ENCODE measurements at regions of chr18 and their contacts with region 1.

Region 1: DNA sequence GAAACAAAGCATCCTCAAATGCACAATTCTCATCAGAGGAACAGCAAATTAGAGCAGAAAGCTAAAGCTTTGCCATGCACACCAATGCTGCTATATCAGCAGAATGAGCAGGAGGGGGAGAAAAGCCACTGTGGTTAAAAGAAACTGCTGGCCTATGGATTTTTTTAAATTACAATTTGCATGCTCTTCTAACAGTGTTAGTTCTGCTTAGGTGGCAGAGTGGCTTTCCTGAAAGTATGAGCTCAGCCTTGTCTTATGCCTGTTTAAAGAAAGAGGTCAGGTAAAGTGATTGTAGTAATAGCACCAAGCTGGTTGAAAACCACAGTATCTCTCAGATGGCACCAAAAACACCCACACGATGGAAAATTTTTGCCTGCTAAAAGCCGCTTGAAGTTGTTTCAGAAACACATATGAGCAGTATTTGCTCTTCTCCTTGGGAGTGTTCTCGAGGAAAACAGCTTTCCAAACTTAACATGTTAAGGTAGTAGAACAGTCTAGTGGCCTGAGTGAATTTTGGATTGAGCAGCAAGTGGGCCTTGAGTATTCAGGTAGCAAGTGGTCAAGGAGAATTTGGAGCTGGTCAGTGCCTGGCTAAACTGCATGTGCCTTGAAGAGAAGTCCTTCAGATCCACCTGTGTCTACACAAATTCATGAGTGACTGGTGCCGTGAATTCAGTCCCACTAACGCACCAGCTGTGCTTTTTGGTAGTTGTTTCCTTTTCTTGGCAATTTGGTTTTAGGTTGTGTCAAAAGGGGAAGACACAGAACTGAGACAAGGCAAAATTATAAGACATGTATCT is 19.6 kb upstream of the NDUFV2 start:
- DNase-seq: peak; percentile 66
- ATAC-seq: peak; percentile 85
- H3K4me3 Mint-ChIP-seq: peak overlapping the region; percentile 56
- H3K27ac Mint-ChIP-seq: peak overlapping the region; percentile 94
- H3K4me1 Mint-ChIP-seq: peaks cover 48% of the 10 kb centered on the region
- H3K27me3 Mint-ChIP-seq: no peaks in the 10 kb centered on the region

Region 2: GRCh38 chr18:9069601-9070000 is 13.3 kb before region 1 on chr18:
- CTCF ChIA-PET with region 1: interaction called, 22 read pairs
- POLR2A ChIA-PET with region 1: interaction called, 10 read pairs
- DNase-seq: no peak
- ATAC-seq: no peak
- H3K4me3 Mint-ChIP-seq: no peak overlapping the region
- H3K27ac Mint-ChIP-seq: peak overlapping the region; percentile 49
- H3K4me1 Mint-ChIP-seq: peaks cover 18% of the 10 kb centered on the region
- H3K27me3 Mint-ChIP-seq: no peaks in the 10 kb centered on the region

Region 3: DNA sequence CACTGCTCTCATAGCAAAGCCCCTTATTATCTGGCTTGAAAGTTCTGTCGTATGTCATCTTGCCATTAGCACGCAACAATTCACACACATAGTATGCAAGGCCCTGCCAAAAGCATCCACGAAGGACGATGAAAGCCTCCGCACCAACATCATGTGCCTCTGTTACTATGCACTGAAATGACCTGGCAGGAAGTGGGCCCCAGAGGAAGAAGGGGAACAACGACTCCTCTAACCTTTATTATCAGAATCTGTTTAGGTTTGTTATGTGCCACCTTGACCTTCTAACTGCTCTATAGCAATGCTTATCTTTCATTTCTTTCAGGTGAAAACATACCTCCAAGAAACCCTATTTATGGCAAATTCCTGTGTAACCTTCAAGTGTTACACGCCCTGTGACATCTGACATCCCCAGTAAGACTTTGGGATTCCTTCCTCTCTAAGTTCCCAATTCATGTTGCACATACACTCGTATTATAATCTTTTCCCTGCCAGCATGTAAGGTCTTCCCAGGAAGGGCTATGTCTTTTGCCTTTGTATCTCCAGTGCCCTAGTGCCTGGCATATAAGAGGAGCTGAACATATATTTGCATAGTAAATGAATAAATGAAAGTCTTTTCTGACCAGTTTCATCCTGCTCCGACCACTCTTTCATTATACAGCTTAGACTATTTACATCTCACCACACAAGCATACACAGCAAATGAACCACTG is 12.5 kb after region 1 on chr18:
- CTCF ChIA-PET with region 1: interaction called, 24 read pairs
- POLR2A ChIA-PET with region 1: interaction called, 128 read pairs
- DNase-seq: peak; percentile 78
- ATAC-seq: peak; percentile 66
- H3K4me3 Mint-ChIP-seq: peak overlapping the region; percentile 54
- H3K27ac Mint-ChIP-seq: peak overlapping the region; percentile 91
- H3K4me1 Mint-ChIP-seq: peaks cover 61% of the 10 kb centered on the region
- H3K27me3 Mint-ChIP-seq: no peaks in the 10 kb centered on the region

Region 4: DNA sequence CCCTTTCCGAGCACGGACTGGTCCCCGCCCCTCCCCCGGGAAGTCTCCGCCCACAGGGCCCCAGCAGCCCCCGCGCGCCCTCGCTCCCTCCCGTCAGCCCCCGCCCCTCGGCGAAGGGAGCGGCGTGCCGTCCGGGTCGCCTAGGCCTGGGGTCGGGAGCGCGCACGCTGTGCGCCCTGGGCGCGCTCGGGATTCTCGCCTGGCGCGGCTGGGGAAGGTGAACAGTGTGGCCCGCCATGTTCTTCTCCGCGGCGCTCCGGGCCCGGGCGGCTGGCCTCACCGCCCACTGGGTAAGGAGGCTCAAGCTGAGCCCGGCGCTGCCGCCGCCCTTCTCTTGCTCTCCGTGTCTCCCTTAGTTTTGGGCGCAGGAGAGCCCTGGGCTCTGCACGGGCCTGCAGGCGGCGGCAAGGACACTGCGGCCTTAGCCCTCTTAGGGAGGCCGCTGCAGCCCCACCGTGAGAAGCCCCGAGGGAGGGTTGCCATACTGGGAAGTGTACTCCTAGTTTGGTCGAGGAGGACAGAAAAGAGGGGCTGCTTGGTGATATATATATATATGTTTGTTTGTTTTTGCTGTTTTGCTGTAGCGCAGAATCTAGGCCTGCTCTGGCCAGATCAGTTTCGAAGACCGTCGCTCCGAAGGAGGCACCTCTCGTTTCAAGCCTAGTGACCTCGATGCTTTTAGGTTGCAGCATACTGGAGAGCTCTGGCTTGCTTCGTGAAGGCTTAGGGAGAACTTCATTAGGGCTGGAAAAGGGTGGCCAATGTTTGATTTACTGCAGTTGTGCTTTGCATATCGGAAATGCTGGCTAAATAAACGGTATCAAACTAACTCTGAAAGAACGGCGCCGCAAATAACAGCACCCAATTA is 19.8 kb after region 1 on chr18 and contains the start of gene NDUFV2:
- CTCF ChIA-PET with region 1: interaction called, 26 read pairs
- POLR2A ChIA-PET with region 1: interaction called, 131 read pairs
- DNase-seq: peak; percentile 98
- ATAC-seq: peak; percentile 91
- H3K4me3 Mint-ChIP-seq: peak within 1 kb of the TSS; percentile 89
- H3K27ac Mint-ChIP-seq: peak within 1 kb of the TSS; percentile 97
- H3K4me1 Mint-ChIP-seq: peaks cover 48% of the 10 kb centered on the region
- H3K27me3 Mint-ChIP-seq: no peaks in the 10 kb centered on the region
- total RNA-seq, gene NDUFV2: 200 to 206 TPM

Region 5: DNA sequence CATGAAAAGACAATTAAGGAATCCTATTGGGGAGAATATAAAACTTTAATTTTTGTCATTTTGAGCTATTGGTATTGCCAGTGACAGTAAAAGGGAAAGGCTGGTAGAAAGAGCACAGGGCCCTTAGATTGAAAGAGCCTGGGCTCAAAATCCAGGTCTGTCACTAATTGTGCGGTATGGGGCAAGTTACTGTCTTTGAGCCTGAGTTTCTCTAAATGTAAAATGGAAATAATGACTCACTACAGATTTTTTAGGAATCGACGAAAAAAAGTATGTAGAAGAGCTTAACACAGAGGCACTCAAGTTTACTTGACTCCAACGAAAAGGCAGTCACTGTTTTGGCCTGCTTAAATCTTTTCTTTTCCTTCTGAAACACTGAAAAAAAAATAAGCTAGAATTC is 26.6 kb after region 1 on chr18:
- CTCF ChIA-PET with region 1: interaction called, 26 read pairs
- POLR2A ChIA-PET with region 1: interaction called, 131 read pairs
- DNase-seq: no peak
- ATAC-seq: no peak
- H3K4me3 Mint-ChIP-seq: peak overlapping the region; percentile 30
- H3K27ac Mint-ChIP-seq: peak overlapping the region; percentile 62
- H3K4me1 Mint-ChIP-seq: peaks cover 83% of the 10 kb centered on the region
- H3K27me3 Mint-ChIP-seq: no peaks in the 10 kb centered on the region

Region 6: GRCh38 chr18:9117980-9118841 is 35.3 kb after region 1 on chr18:
- CTCF ChIA-PET with region 1: interaction called, 19 read pairs
- POLR2A ChIA-PET with region 1: interaction called, 20 read pairs
- DNase-seq: no peak
- ATAC-seq: peak; percentile 48
- H3K4me3 Mint-ChIP-seq: peak overlapping the region; percentile 59
- H3K27ac Mint-ChIP-seq: peak overlapping the region; percentile 86
- H3K4me1 Mint-ChIP-seq: peaks cover 75% of the 10 kb centered on the region
- H3K27me3 Mint-ChIP-seq: no peaks in the 10 kb centered on the region

Region 7: DNA sequence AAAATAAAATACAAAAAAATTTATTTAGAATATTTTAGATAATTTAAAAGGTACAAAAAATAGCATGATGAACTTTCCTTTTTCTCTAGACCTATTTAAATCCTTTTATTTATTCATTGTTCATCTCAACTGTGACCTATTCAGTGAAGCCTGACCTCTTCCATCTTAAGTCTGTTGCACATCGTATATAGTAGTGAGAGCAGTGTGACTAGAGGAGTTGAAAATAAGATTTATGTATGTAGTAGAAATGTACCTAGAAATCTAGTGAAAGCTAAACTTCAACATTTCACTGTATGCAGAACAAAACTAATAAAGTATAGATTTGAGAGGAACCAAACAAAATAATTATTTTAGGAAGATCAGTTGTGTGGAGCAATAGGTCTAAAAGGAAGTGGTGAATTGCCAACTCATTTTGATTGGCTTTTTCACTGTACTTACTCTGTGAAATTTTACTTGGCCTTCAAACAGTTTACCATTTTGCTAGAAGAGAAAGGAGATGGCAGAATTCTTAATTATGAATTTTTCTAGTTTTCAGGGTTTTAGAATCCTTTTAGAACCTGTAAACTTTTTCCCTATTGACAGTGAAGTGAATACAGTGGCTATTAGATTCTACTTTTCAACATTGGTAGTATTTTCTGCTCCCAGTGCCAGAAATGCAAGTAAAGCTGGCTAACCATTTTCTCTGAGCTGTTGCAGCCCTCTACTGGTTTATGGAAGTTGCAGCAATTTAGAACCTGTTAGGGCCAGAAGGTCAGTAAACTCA is 64.7 kb after region 1 on chr18:
- CTCF ChIA-PET with region 1: interaction called, 11 read pairs
- POLR2A ChIA-PET with region 1: no interaction called
- DNase-seq: peak; percentile 61
- ATAC-seq: peak; percentile 74
- H3K4me3 Mint-ChIP-seq: peak overlapping the region; percentile 1
- H3K27ac Mint-ChIP-seq: peak overlapping the region; percentile 69
- H3K4me1 Mint-ChIP-seq: peaks cover 75% of the 10 kb centered on the region
- H3K27me3 Mint-ChIP-seq: no peaks in the 10 kb centered on the region